Mammary epithelial cell (primary cell): ENCODE measurements at regions of chr3 and their contacts with region 1.

Region 1: DNA sequence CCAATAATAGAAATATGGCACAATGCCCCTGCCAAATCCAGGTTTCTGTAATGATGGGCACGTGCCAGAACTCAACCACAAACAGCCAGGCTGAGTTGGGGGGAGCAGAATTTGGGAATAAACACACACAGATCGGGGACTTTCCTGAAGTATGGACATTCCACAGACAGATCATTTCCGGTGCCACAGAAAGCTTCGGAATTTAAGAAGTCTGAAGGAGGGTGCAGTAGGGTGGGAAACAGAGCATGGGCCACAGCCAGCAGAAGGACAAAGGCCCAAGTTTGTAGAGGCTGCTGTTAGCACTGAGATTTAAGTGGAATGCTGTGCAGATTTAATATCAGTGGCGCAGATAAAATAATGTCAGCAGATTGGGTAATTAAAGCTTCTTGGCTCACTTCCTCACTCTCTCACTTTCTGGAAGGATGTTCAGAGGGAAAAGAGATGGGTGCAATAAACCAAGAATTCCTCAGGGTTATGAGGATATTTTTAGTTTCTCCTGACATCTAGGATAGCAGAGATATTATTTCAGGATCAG is 67.4 kb downstream of the MYLK start:
- DNase-seq: no peak
- H3K4me3 ChIP-seq: no peak overlapping the region
- H3K27ac ChIP-seq: peak overlapping the region; percentile 69
- H3K4me1 ChIP-seq: peaks cover 74% of the 10 kb centered on the region
- H3K27me3 ChIP-seq: no peaks in the 10 kb centered on the region
- CTCF ChIP-seq: no peak

Region 2: GRCh38 chr3:123739754-123740153 is 77.0 kb before region 1 on chr3:
- CTCF ChIA-PET with region 1: interaction called, 3 read pairs
- dilution Hi-C with region 1: loop called (anchors 5 kb)
- in situ Hi-C with region 1: no loop called
- intact Hi-C with region 1: no loop called
- DNase-seq: peak; percentile 83
- H3K4me3 ChIP-seq: no peak overlapping the region
- H3K27ac ChIP-seq: peak overlapping the region; percentile 61
- H3K4me1 ChIP-seq: peaks cover 44% of the 10 kb centered on the region
- H3K27me3 ChIP-seq: no peaks in the 10 kb centered on the region
- CTCF ChIP-seq: no peak

Region 3: GRCh38 chr3:123773681-123774431 is 42.9 kb before region 1 on chr3:
- CTCF ChIA-PET with region 1: no interaction called
- dilution Hi-C with region 1: no loop called
- in situ Hi-C with region 1: no loop called
- intact Hi-C with region 1: no loop called
- DNase-seq: no peak
- H3K4me3 ChIP-seq: no peak overlapping the region
- H3K27ac ChIP-seq: no peak overlapping the region
- H3K4me1 ChIP-seq: peaks cover 11% of the 10 kb centered on the region
- H3K27me3 ChIP-seq: no peaks in the 10 kb centered on the region
- CTCF ChIP-seq: no peak

Region 4: DNA sequence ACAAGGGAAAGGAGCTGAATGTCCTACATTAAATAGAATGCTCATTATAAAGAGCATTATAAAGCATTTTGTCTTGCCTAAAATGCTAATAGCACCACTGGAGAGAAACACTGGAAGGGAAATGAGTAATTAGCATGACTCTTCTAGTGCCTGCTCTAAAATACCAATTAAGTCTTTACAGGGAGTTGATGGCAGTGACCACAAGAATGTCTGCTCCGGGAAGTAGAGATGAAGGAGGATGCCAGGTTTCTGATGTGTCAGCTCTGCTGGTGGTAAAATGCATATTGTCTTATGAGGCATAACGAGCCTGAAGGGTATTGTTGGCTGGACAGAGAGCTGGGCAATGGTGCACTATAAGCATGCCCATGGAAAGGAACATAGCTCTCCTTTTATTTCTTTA is 17.9 kb after region 1 on chr3:
- CTCF ChIA-PET with region 1: no interaction called
- dilution Hi-C with region 1: no loop called
- in situ Hi-C with region 1: no loop called
- intact Hi-C with region 1: loop called (anchors 2 kb)
- DNase-seq: peak; percentile 94
- H3K4me3 ChIP-seq: no peak overlapping the region
- H3K27ac ChIP-seq: peak overlapping the region; percentile 58
- H3K4me1 ChIP-seq: peaks cover 62% of the 10 kb centered on the region
- H3K27me3 ChIP-seq: no peaks in the 10 kb centered on the region
- CTCF ChIP-seq: no peak